ENCODE measurements at regions of chr11 and their contacts with region 1.

Region 1: DNA sequence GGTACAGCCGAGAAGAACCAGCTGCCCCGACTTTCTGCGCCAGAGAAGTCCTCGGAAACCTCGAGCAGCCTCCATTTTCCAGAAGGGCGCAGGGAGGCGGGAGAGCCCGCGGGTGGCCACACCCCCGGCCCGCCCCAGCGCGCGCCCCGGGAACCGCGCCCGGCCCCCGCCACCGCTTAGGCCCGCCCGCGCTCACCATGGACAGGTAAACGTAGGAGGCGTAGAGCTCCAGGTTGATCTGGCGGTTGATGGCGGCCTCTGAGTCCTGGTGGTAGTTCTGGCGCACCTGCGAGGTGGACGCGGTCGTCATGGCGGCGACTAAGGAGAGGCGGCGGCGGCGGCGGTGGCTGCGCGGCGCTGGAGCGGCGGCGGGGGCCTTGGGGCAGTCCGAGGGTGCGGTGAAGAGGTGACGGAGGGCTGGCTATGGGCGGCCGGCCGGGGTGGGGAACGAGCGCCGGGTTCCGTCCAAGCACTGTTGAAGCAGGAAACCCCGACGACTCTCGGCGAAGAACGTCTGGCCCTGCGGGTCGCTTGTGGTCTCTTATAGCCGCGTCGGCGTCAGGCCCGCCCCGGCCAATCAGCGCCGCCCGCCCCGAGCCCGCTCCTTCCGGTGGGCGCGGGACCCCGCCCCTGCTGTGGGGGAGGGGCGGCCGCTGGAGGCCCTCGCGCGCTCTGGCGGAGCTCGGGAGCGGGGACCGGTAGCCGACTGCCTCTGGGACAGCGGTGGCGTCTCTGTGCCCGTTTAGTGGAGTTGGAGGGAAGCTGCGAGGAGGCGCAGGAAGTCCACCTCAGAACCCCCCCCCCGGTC is at the start of gene FTH1:
- DNase-seq: no peak
- ATAC-seq: peak; percentile 72
- H3K4me3 ChIP-seq: peak within 1 kb of the TSS; percentile 100
- H3K27ac ChIP-seq: peak within 1 kb of the TSS; percentile 96
- H3K4me1 ChIP-seq: peaks cover 47% of the 10 kb centered on the region
- H3K27me3 ChIP-seq: no peaks in the 10 kb centered on the region
- CTCF ChIP-seq: no peak
- EP300 ChIP-seq: no peak
- POLR2A ChIP-seq: peak; percentile 79
- RAD21 ChIP-seq: no peak
- polyA plus RNA-seq, gene FTH1: 295 to 816 TPM

Region 2: DNA sequence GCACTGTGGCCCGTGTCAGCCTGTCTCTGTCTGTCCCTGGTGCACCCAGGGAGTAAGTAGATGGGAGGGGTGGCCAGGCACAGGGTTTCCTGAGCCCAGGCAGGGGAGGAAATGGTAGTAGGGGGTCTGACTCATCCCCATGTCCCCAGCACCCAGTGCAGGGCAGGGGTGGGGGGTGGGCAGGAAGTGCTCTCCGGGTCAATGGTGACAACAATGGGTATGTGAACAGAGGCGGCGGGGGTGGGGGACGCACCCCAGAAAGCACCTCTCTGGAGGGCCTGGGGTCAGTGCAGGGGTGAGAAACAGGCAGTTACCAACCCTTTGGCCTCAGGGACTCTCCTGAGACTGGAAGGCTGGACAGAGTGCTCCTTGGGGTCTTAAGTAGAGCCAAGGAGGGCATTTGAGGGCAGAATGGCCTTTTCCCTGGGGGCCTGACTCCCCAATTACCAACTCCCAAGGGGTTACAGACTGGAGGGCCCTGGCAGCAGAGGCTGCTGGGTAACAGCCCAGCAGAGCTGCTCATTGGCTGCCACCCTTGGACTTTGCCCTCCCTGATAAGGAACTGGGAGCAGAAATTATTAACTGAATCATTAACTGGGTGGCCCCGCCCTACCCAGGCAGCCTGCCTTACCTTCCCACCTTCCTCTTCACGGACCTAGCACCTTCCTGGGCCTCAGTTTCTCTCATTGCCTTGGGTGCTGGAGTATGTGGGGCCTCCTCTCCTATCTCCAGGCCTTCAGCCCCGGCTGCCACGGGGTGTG is 210.7 kb before region 1 on chr11:
- CTCF ChIA-PET with region 1: interaction called, 3 read pairs
- POLR2A ChIA-PET with region 1: interaction called, 12 read pairs
- RAD21 ChIA-PET with region 1: no interaction called
- SMC1A ChIA-PET with region 1: interaction called, 3 read pairs
- in situ Hi-C with region 1: no loop called
- intact Hi-C with region 1: no loop called
- DNase-seq: peak; percentile 73
- ATAC-seq: peak; percentile 85
- H3K4me3 ChIP-seq: no peak overlapping the region
- H3K27ac ChIP-seq: no peak overlapping the region
- H3K4me1 ChIP-seq: peaks cover 8% of the 10 kb centered on the region
- H3K27me3 ChIP-seq: no peaks in the 10 kb centered on the region; a peak in 1 of 4 replicates
- CTCF ChIP-seq: no peak
- EP300 ChIP-seq: peak; percentile 48 to 49; a peak in 3 of 4 replicates
- POLR2A ChIP-seq: no peak; the same call in 1 of the 2 replicates
- RAD21 ChIP-seq: no peak

Region 3: DNA sequence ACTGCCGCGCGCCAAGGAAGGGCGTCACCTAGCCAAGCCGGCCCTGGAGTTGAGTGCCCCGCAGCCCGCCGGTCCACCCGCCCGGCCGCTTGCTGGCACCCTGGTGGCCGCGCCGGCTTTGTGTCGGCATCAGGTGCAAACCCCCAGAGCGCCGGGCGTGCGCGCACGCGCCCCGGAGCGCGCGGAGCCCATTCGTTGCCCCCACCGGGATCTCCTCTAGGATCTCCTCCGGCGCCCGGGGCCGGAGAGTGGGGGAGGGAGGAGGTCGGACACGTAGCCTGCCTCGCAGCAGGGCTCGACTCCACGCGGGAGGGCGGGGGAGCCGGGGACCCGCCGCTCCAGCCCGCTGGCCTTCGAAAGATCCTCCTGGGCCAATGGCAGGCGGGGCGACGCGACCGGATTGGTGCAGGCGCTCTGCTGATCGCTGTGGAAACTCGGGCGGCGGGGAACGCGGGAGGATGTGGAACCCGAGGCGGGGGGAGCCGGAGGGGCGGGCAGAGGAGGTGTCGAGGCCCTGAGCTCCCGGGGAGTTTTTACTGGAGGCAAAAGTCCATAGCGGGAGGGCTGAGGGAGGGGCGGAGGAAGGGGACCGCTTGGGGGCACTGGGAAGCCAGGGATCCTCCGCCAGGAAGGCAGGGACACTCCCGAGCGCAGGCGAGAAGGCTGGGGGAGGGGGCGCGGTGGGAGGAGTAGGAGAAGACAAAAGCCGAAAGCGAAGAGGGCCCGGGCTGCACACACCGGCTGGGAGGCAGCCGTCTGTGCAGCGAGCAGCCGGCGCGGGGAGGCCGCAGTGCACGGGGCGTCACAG is 139.5 kb before region 1 on chr11 and contains the start of gene FADS2:
- CTCF ChIA-PET with region 1: interaction called, 4 read pairs
- POLR2A ChIA-PET with region 1: interaction called, 15 read pairs
- RAD21 ChIA-PET with region 1: interaction called, 3 read pairs
- SMC1A ChIA-PET with region 1: interaction called, 5 read pairs
- in situ Hi-C with region 1: no loop called
- intact Hi-C with region 1: loop called (anchors 5 kb)
- DNase-seq: peak; percentile 81
- ATAC-seq: peak; percentile 87
- H3K4me3 ChIP-seq: peak within 1 kb of the TSS; percentile 100
- H3K27ac ChIP-seq: peak within 1 kb of the TSS; percentile 95
- H3K4me1 ChIP-seq: peaks cover 19% of the 10 kb centered on the region
- H3K27me3 ChIP-seq: no peaks in the 10 kb centered on the region
- CTCF ChIP-seq: peak in 2 of 3 experiments; percentile 9 to 14; a peak in 2 of 6 replicates
- EP300 ChIP-seq: no peak
- POLR2A ChIP-seq: peak; percentile 84
- RAD21 ChIP-seq: no peak
- polyA plus RNA-seq, gene FADS2: 3.3 to 6.4 TPM

Region 4: GRCh38 chr11:62004473-62004872 is 37.2 kb after region 1 on chr11:
- CTCF ChIA-PET with region 1: interaction called, 3 read pairs
- POLR2A ChIA-PET with region 1: interaction called, 3 read pairs
- RAD21 ChIA-PET with region 1: interaction called, 4 read pairs
- SMC1A ChIA-PET with region 1: interaction called, 12 read pairs
- in situ Hi-C with region 1: no loop called
- intact Hi-C with region 1: loop called (anchors 1 kb)
- DNase-seq: peak; percentile 66
- ATAC-seq: peak; percentile 98
- H3K4me3 ChIP-seq: no peak overlapping the region
- H3K27ac ChIP-seq: peak overlapping the region; percentile 39; the same call in 1 of the 2 replicates
- H3K4me1 ChIP-seq: peaks cover 12% of the 10 kb centered on the region
- H3K27me3 ChIP-seq: no peaks in the 10 kb centered on the region
- CTCF ChIP-seq: no peak
- EP300 ChIP-seq: 0 out of 4 replicates have a peak, but pooled peaks of 1 of the 2 experiments have one; percentile 16
- POLR2A ChIP-seq: no peak
- RAD21 ChIP-seq: no peak

Region 5: GRCh38 chr11:62054484-62055121 is 87.3 kb after region 1 on chr11:
- CTCF ChIA-PET with region 1: interaction called, 6 read pairs
- POLR2A ChIA-PET with region 1: interaction called, 3 read pairs
- RAD21 ChIA-PET with region 1: no interaction called
- SMC1A ChIA-PET with region 1: no interaction called
- in situ Hi-C with region 1: no loop called
- intact Hi-C with region 1: loop called (anchors 5 kb)
- DNase-seq: no peak
- ATAC-seq: peak; percentile 51; the same call in 1 of the 3 replicates
- H3K4me3 ChIP-seq: no peak overlapping the region
- H3K27ac ChIP-seq: no peak overlapping the region
- H3K4me1 ChIP-seq: no peaks in the 10 kb centered on the region
- H3K27me3 ChIP-seq: no peaks in the 10 kb centered on the region
- CTCF ChIP-seq: peak; percentile 48 to 69 (median 49); a peak in 5 of 6 replicates
- EP300 ChIP-seq: no peak
- POLR2A ChIP-seq: no peak
- RAD21 ChIP-seq: peak; percentile 56

Region 6: DNA sequence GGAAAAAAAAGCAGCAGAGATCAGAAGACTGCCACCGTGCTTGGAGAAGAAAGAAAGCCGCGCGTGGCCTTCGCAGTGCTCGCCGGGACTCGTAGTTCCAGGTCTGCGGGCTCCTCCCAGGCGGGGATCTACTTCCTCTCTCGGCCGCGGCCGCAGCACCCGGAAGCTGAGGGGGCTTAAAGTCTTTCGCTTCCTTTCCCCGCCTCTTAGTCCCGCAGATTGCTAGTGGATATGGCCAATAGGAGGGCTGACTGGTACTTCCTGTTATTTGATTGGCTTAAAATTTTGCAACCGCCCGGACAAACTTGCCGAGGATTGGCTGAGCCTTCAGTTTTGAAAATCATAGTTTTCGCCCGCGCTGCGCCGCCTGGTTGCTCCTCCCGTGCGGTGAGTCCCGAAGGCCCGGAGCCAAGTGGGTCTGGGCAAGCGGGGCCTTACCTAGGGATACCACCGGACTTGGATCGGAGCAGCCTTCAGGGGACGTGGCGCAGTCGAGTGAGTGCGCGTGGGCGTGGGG is 156.4 kb after region 1 on chr11 and contains the start of gene INCENP:
- CTCF ChIA-PET with region 1: no interaction called
- POLR2A ChIA-PET with region 1: interaction called, 4 read pairs
- RAD21 ChIA-PET with region 1: no interaction called
- SMC1A ChIA-PET with region 1: no interaction called
- in situ Hi-C with region 1: no loop called
- intact Hi-C with region 1: loop called (anchors 5 kb)
- DNase-seq: peak; percentile 96
- ATAC-seq: peak; percentile 98
- H3K4me3 ChIP-seq: peak within 1 kb of the TSS; percentile 95
- H3K27ac ChIP-seq: peak within 1 kb of the TSS; percentile 90
- H3K4me1 ChIP-seq: no peaks in the 10 kb centered on the region
- H3K27me3 ChIP-seq: no peaks in the 10 kb centered on the region
- CTCF ChIP-seq: no peak
- EP300 ChIP-seq: no peak
- POLR2A ChIP-seq: peak; percentile 75
- RAD21 ChIP-seq: no peak
- polyA plus RNA-seq, gene INCENP: 1.4 to 3.7 TPM

Region 7: DNA sequence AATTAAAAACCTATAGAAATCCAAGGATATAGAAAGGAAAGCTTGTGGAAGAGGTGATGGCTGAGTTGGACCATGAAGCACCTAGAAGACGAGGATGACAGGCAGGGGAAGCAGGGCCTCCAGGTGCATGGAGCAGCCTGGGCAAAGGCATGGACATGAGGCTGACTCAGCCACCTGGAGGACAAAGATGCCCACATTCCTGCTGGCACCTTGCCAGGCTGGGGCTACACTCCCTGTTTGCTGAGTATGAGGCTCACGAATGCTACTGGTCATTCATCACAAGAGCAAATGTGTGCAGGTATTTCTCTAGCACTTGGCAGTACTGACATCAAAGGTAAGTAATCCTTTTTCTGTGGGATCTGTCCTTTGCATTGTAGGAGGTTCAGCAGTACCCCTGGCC is 234.1 kb after region 1 on chr11:
- CTCF ChIA-PET with region 1: no interaction called
- POLR2A ChIA-PET with region 1: no interaction called
- RAD21 ChIA-PET with region 1: no interaction called
- SMC1A ChIA-PET with region 1: no interaction called
- in situ Hi-C with region 1: no loop called
- intact Hi-C with region 1: no loop called
- DNase-seq: no peak
- ATAC-seq: no peak
- H3K4me3 ChIP-seq: no peak overlapping the region
- H3K27ac ChIP-seq: no peak overlapping the region
- H3K4me1 ChIP-seq: no peaks in the 10 kb centered on the region
- H3K27me3 ChIP-seq: peaks cover 0 to 3% of the 10 kb centered on the region in 2 experiments; a peak in 1 of 4 replicates
- CTCF ChIP-seq: no peak
- EP300 ChIP-seq: no peak
- POLR2A ChIP-seq: no peak
- RAD21 ChIP-seq: no peak

Measured in GM12878 (cell line).